Ascending aorta (tissue), 2 donors: ENCODE measurements at regions of chr10 and their contacts with region 1.

Region 1: GRCh38 chr10:21732067-21732772 is 198.2 kb downstream of the MLLT10 start:
- DNase-seq: no peak
- H3K4me3 ChIP-seq: no peak overlapping the region
- H3K27ac ChIP-seq: no peak overlapping the region
- H3K4me1 ChIP-seq: no peaks in the 10 kb centered on the region
- H3K27me3 ChIP-seq: no peaks in the 10 kb centered on the region
- CTCF ChIP-seq: peak; percentile 62 to 79 (median 74)

Region 2: DNA sequence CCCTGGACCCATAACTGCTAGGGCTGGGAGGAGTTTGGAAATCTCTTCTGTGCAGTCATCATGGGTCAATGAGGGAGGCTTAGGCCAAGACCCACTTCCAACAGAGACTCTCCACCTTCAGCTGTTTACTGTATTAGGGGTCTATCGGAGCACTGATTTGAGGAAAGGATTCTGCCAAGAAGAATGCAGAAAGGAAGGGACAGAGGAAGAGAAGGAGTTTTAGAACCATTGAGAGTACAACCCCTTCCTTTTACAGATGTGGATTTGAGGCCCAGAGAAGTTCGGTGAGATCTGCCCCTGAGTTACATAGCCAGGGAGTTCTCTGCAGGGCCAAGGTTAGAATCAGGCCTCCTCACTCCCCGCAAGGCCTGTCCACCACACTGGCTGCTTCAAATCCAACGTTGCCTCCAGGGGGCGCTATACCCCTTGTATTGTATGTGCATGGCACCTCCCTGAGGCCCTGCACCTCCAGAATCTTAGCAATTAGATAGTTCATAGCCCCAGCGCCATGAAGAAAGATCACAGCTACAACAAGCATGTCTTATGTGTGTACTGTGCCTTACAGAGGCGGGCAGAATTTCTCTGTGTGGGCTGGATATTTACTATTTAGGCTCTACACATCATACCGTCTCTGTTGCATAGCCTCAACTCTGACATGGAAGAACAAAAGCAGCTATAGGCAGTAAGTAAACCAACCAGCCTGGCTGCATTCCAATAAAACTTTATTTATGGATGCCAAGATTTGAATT is 453.6 kb before region 1 on chr10:
- intact Hi-C with region 1: loop called (anchors 2 kb)
- DNase-seq: peak; percentile 56 to 93
- H3K4me3 ChIP-seq: no peak overlapping the region
- H3K27ac ChIP-seq: no peak overlapping the region
- H3K4me1 ChIP-seq: peaks cover 0 to 2% of the 10 kb centered on the region in 2 donors
- H3K27me3 ChIP-seq: no peaks in the 10 kb centered on the region
- CTCF ChIP-seq: peak; percentile 48 to 66 (median 61)

Region 3: GRCh38 chr10:22534849-22535604 is 802.8 kb after region 1 on chr10:
- intact Hi-C with region 1: no loop called
- DNase-seq: no peak
- H3K4me3 ChIP-seq: no peak overlapping the region
- H3K27ac ChIP-seq: no peak overlapping the region
- H3K4me1 ChIP-seq: no peaks in the 10 kb centered on the region
- H3K27me3 ChIP-seq: no peaks in the 10 kb centered on the region
- CTCF ChIP-seq: no peak